Natural killer cell (primary cell): ENCODE measurements at regions of chr3 and their contacts with region 1.

Region 1: DNA sequence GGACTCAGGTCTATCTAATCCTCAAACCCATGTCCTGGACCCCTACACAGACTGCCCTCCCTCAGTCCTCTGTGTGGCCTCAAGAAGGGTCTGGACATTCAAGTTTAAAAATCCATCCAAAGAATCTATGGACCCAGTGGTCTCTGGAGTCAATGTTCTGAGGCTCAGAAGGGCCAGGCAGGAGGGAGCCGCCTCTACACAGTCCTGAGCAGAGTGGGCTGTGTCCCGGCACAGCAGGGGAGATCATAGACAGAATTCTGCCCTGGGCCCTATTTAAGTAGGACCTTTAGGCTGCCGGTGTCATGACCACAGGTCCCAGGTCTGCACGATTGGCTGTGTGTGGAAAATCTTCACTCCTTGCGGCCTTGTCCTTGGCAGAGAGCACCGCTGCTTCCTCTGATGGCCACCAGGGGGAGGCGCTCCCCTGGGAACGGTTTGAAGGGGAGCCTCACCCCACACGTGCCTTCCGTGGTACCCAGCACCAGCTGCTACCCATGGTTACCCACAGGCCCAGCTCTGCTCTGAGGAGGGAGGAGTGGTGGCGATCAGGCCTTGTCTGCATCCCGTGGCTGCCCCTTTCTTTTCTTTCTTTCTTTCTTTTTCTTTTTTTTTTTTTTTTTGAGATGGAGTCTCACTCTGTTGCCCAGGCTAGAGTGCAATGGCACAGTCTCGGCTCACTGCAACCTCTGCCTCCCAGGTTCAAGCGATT is 37.9 kb downstream of the CHRD start:
- DNase-seq: peak; percentile 30 to 84
- ATAC-seq: peak; percentile 72 to 97 (median 90)
- H3K4me3 ChIP-seq: no peak overlapping the region
- H3K4me3 Mint-ChIP-seq: no peak overlapping the region
- H3K27ac ChIP-seq: no peak overlapping the region
- H3K27ac Mint-ChIP-seq: no peak overlapping the region
- H3K4me1 ChIP-seq: peaks cover 3% of the 10 kb centered on the region
- H3K4me1 Mint-ChIP-seq: no peaks in the 10 kb centered on the region
- H3K27me3 ChIP-seq: no peaks in the 10 kb centered on the region
- H3K27me3 Mint-ChIP-seq: peaks cover under 1 to 8% of the 10 kb centered on the region in 2 donors
- CTCF ChIP-seq: peak; percentile 70

Region 2: GRCh38 chr3:184543843-184544512 is 126.2 kb after region 1 on chr3:
- intact Hi-C with region 1: loop called (anchors 10 kb)
- DNase-seq: peak; percentile 57 to 87
- ATAC-seq: peak; percentile 79 to 93 (median 89)
- H3K4me3 ChIP-seq: no peak overlapping the region
- H3K4me3 Mint-ChIP-seq: no peak overlapping the region
- H3K27ac ChIP-seq: no peak overlapping the region
- H3K27ac Mint-ChIP-seq: peak overlapping the region in 1 of 2 donors; percentile 52
- H3K4me1 ChIP-seq: peaks cover 9% of the 10 kb centered on the region
- H3K4me1 Mint-ChIP-seq: peaks cover 8 to 9% of the 10 kb centered on the region in 2 donors
- H3K27me3 ChIP-seq: peaks cover 5% of the 10 kb centered on the region
- H3K27me3 Mint-ChIP-seq: peaks cover 42 to 48% of the 10 kb centered on the region in 2 donors
- CTCF ChIP-seq: peak; percentile 82

Region 3: DNA sequence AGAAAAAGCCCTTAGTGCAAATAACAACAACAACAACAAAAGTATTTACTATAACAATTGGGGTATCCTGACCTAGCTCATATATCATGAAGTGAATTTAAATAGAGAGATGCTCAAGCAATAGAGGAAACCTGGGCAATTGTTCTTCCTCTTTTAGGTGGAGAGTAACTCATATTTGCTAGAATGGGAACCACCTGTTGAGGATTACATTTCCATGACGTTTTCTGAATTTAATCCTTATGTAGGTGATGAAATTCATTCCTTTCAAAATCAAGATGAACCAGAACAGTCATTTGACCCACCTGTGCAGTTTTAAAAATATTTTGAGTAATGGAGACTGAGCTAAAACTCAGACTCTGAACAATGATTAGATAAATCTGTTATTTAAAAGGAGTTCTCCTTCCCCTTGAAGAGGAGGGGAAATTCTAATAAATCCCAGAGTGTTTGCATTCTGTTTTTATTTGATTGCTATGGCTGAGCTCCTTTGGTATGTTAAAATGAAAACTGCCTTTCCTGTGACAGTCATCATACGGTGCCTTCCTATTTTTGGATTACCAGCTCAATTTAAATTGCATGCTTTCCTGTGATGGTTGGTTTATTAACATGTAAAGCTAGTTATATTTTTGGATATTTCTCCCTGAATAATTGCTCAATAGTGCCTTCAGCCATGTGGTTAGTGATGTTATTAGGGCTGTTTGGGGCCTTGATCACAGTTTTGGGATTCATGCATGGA is 418.5 kb after region 1 on chr3:
- intact Hi-C with region 1: no loop called
- DNase-seq: no peak
- ATAC-seq: no peak
- H3K4me3 ChIP-seq: no peak overlapping the region
- H3K4me3 Mint-ChIP-seq: no peak overlapping the region
- H3K27ac ChIP-seq: no peak overlapping the region
- H3K27ac Mint-ChIP-seq: no peak overlapping the region
- H3K4me1 ChIP-seq: no peaks in the 10 kb centered on the region
- H3K4me1 Mint-ChIP-seq: peaks cover 9 to 16% of the 10 kb centered on the region in 2 donors
- H3K27me3 ChIP-seq: no peaks in the 10 kb centered on the region
- H3K27me3 Mint-ChIP-seq: no peaks in the 10 kb centered on the region
- CTCF ChIP-seq: no peak

Region 4: GRCh38 chr3:184874709-184875644 is 457.2 kb after region 1 on chr3:
- intact Hi-C with region 1: no loop called
- DNase-seq: peak in 1 of 2 donors; percentile 24
- ATAC-seq: no peak
- H3K4me3 ChIP-seq: no peak overlapping the region
- H3K4me3 Mint-ChIP-seq: no peak overlapping the region
- H3K27ac ChIP-seq: no peak overlapping the region
- H3K27ac Mint-ChIP-seq: no peak overlapping the region
- H3K4me1 ChIP-seq: no peaks in the 10 kb centered on the region
- H3K4me1 Mint-ChIP-seq: peaks cover 0 to 4% of the 10 kb centered on the region in 2 donors
- H3K27me3 ChIP-seq: no peaks in the 10 kb centered on the region
- H3K27me3 Mint-ChIP-seq: no peaks in the 10 kb centered on the region
- CTCF ChIP-seq: no peak